Activated naive CD4-positive, alpha-beta T cell treated with anti-CD3 and anti-CD28 coated beads, Interleukin-2, amount 10 ng/mL, durations not matched to agents 7 days and 5 days (primary cell): ENCODE measurements at regions of chr15 and their contacts with region 1.

Region 1: DNA sequence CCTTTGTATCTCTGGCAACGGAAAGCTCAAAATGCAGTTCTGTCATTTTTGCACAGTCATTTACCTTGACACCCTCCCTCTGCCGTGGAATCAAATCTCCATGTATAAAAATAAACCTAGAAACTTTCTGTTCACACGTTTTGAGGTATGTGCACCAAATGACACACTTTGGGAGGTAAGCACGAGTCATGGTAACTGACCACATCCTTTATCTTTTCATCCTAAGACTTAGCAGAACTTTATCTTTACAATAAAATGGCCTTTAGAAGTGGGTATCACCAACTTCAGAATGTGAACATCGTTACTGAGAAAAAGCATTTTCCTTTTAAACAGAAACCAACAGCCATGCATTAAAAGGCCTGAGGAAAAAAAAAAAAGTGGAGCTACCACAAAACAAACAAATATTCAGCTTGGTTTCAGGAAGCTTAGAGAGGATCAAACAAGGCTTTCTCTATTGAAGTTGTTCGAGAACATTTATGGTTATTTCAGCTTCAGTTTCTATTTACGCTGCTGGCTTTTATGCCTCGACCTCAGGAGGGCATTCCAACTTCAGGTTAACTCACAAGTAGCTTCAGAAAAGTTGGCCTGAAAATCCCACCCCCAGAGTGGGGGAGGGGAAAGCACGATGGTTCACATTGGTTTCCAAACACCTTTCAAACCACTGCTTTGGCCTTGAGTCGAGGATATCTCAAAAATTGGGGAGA is 171.1 kb upstream of the ICE2 start:
- DNase-seq: peak; percentile 68
- H3K4me3 Mint-ChIP-seq: peak overlapping the region; percentile 69
- H3K27ac Mint-ChIP-seq: peak overlapping the region; percentile 80
- H3K4me1 Mint-ChIP-seq: peaks cover 49% of the 10 kb centered on the region
- H3K27me3 Mint-ChIP-seq: peaks cover 3% of the 10 kb centered on the region

Region 2: GRCh38 chr15:60905587-60905986 is 255.6 kb after region 1 on chr15:
- CTCF ChIA-PET with region 1: interaction called, 10 read pairs
- DNase-seq: peak; percentile 49
- H3K4me3 Mint-ChIP-seq: no peak overlapping the region
- H3K27ac Mint-ChIP-seq: no peak overlapping the region
- H3K4me1 Mint-ChIP-seq: peaks cover 33% of the 10 kb centered on the region
- H3K27me3 Mint-ChIP-seq: peaks cover 4% of the 10 kb centered on the region